PC-3 (cell line): ENCODE measurements at regions of chr19 and their contacts with region 1.

Region 1: GRCh38 chr19:4633140-4633967 is 6.0 kb upstream of the TNFAIP8L1 start:
- DNase-seq: peak; percentile 81
- ATAC-seq: peak; percentile 55
- H3K4me3 ChIP-seq: no peak overlapping the region
- H3K27ac ChIP-seq: no peak overlapping the region
- H3K4me1 ChIP-seq: peaks cover 16% of the 10 kb centered on the region
- H3K27me3 ChIP-seq: no peaks in the 10 kb centered on the region
- CTCF ChIP-seq: peak; percentile 94

Region 2: GRCh38 chr19:4547303-4548237 is 85.8 kb before region 1 on chr19:
- CTCF ChIA-PET with region 1: no interaction called
- POLR2A ChIA-PET with region 1: no interaction called
- intact Hi-C with region 1: no loop called
- DNase-seq: peak; percentile 51
- ATAC-seq: peak; percentile 73
- H3K4me3 ChIP-seq: no peak overlapping the region
- H3K27ac ChIP-seq: no peak overlapping the region
- H3K4me1 ChIP-seq: no peaks in the 10 kb centered on the region
- H3K27me3 ChIP-seq: peaks cover 10% of the 10 kb centered on the region; the same call in 1 of the 2 replicates
- CTCF ChIP-seq: peak; percentile 71

Region 3: GRCh38 chr19:4576016-4576933 is 57.1 kb before region 1 on chr19:
- CTCF ChIA-PET with region 1: interaction called, 6 read pairs
- POLR2A ChIA-PET with region 1: no interaction called
- intact Hi-C with region 1: loop called (anchors 5 kb)
- DNase-seq: peak; percentile 68
- ATAC-seq: peak; percentile 24
- H3K4me3 ChIP-seq: no peak overlapping the region
- H3K27ac ChIP-seq: no peak overlapping the region
- H3K4me1 ChIP-seq: peaks cover 15% of the 10 kb centered on the region
- H3K27me3 ChIP-seq: peaks cover 7% of the 10 kb centered on the region; the same call in 1 of the 2 replicates
- CTCF ChIP-seq: peak; percentile 90

Region 4: GRCh38 chr19:4776436-4777205 is 143.3 kb after region 1 on chr19:
- CTCF ChIA-PET with region 1: no interaction called
- POLR2A ChIA-PET with region 1: no interaction called
- intact Hi-C with region 1: no loop called
- DNase-seq: peak; percentile 48
- ATAC-seq: no peak
- H3K4me3 ChIP-seq: no peak overlapping the region
- H3K27ac ChIP-seq: no peak overlapping the region
- H3K4me1 ChIP-seq: no peaks in the 10 kb centered on the region
- H3K27me3 ChIP-seq: peaks cover 7% of the 10 kb centered on the region; the same call in 1 of the 2 replicates
- CTCF ChIP-seq: no peak